MCF 10A (cell line): ENCODE measurements at regions of chr2 and their contacts with region 1.

Region 1: DNA sequence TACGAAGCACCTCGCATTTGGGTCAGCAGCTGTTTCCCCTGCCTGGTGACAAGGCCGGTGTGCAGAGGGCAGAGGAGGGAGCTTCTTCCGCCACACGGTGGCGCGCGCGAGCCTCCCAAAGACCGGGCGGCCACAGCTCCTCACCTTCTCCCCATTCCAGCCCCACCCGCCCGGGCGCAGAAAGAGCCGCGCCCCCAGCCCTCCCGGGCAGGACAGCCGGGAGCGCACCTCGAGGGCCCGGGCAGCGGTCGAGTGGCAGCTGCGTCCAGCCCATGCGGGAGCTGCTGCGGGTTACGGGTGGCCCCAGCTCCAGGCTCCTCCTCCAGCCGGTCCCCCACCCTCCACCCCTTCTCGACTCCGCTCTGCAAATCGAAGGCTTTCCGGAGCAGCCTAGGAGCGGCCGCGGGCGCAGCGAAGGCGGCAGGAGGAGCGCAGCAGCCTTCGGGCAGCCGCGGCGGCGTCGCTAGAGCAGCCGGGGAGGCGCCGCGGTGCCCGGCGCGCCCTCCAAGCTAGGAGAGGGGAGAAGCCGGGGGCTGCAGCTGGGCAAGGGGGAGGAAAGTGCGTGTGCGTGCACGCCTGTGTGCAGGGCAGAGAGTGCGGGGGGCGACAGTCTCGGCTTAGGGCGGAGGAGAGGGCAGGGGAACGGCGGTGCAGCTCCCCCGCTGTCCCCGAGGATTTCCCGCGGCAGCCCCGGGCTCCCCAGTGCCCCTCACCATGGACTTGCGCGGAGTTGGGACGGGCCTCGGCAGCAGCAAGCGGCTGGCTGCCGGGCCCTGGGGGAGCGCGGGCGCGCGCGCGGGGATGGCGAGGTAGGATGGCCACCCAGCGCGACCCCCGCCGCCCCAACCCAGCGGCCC is at the start of gene CCDC85A:
- DNase-seq: peak; percentile 83
- H3K4me3 Mint-ChIP-seq: peak within 1 kb of the TSS; percentile 89
- H3K27ac Mint-ChIP-seq: no peak within 1 kb of the TSS
- H3K4me1 Mint-ChIP-seq: peaks cover 11% of the 10 kb centered on the region
- H3K27me3 Mint-ChIP-seq: no peaks in the 10 kb centered on the region
- CTCF ChIP-seq: peak; percentile 94
- total RNA-seq, gene CCDC85A: 0.16 and 0.20 TPM in 2 replicates

Region 2: DNA sequence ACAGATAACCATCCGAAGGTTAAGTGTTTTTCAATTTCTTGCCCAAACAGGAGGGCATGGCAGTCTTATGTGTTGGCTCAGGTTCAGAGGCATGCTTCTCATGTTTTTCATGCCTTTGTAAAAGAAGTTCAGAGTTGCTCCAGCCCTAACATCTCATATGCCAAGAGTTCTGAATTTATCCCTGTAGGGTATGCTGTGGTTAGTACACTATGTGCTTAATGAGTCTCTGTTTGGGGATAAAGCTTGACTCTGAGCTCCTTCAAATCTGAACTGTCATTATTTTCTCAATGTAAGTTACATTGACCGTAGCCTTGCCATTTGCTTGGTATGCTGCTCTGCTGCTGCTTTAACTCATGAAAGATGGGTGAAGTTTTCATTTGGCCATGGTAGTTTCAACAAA is 422.3 kb before region 1 on chr2:
- CTCF ChIA-PET with region 1: no interaction called
- POLR2A ChIA-PET with region 1: no interaction called
- intact Hi-C with region 1: no loop called
- DNase-seq: peak; percentile 83
- H3K4me3 Mint-ChIP-seq: peak overlapping the region; percentile 42
- H3K27ac Mint-ChIP-seq: peak overlapping the region; percentile 80
- H3K4me1 Mint-ChIP-seq: peaks cover 30% of the 10 kb centered on the region
- H3K27me3 Mint-ChIP-seq: no peaks in the 10 kb centered on the region
- CTCF ChIP-seq: no peak

Region 3: GRCh38 chr2:56244911-56245530 is 61.1 kb after region 1 on chr2:
- CTCF ChIA-PET with region 1: no interaction called
- POLR2A ChIA-PET with region 1: no interaction called
- intact Hi-C with region 1: no loop called
- DNase-seq: peak; percentile 40
- H3K4me3 Mint-ChIP-seq: no peak overlapping the region
- H3K27ac Mint-ChIP-seq: no peak overlapping the region
- H3K4me1 Mint-ChIP-seq: peaks cover 6% of the 10 kb centered on the region
- H3K27me3 Mint-ChIP-seq: no peaks in the 10 kb centered on the region
- CTCF ChIP-seq: no peak

Region 4: GRCh38 chr2:56741601-56742102 is 557.8 kb after region 1 on chr2:
- CTCF ChIA-PET with region 1: interaction called, 25 read pairs
- POLR2A ChIA-PET with region 1: interaction called, 8 read pairs
- intact Hi-C with region 1: no loop called
- DNase-seq: peak; percentile 95
- H3K4me3 Mint-ChIP-seq: peak overlapping the region; percentile 63
- H3K27ac Mint-ChIP-seq: peak overlapping the region; percentile 96
- H3K4me1 Mint-ChIP-seq: peaks cover 28% of the 10 kb centered on the region
- H3K27me3 Mint-ChIP-seq: no peaks in the 10 kb centered on the region
- CTCF ChIP-seq: no peak

Region 5: GRCh38 chr2:56749152-56749752 is 565.4 kb after region 1 on chr2:
- CTCF ChIA-PET with region 1: interaction called, 25 read pairs
- POLR2A ChIA-PET with region 1: interaction called, 3 read pairs
- intact Hi-C with region 1: no loop called
- DNase-seq: peak; percentile 44
- H3K4me3 Mint-ChIP-seq: no peak overlapping the region
- H3K27ac Mint-ChIP-seq: no peak overlapping the region
- H3K4me1 Mint-ChIP-seq: no peaks in the 10 kb centered on the region
- H3K27me3 Mint-ChIP-seq: no peaks in the 10 kb centered on the region
- CTCF ChIP-seq: peak; percentile 40

Region 6: DNA sequence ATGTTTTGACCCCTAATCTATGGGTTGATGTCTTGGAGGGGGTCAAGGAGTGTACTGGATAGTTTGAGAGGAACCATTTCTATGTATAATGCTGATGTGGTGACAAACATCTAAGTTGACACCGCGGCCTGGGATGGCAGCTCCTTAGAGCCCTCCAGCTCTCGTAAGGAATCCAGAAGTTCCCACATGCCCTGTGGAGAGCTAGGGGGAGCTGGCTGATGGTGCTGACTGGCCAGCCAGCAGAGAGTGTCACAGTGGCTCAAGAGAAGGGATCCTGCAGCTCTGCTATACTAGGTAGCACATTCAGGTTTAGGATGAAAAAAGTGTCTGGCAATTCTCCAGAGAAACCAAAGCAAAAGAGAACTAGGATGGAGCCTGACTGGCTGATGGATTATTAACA is 1020.5 kb after region 1 on chr2:
- CTCF ChIA-PET with region 1: no interaction called
- POLR2A ChIA-PET with region 1: no interaction called
- intact Hi-C with region 1: loop called (anchors 10 kb)
- DNase-seq: no peak
- H3K4me3 Mint-ChIP-seq: no peak overlapping the region
- H3K27ac Mint-ChIP-seq: no peak overlapping the region
- H3K4me1 Mint-ChIP-seq: no peaks in the 10 kb centered on the region
- H3K27me3 Mint-ChIP-seq: no peaks in the 10 kb centered on the region
- CTCF ChIP-seq: no peak

Region 7: DNA sequence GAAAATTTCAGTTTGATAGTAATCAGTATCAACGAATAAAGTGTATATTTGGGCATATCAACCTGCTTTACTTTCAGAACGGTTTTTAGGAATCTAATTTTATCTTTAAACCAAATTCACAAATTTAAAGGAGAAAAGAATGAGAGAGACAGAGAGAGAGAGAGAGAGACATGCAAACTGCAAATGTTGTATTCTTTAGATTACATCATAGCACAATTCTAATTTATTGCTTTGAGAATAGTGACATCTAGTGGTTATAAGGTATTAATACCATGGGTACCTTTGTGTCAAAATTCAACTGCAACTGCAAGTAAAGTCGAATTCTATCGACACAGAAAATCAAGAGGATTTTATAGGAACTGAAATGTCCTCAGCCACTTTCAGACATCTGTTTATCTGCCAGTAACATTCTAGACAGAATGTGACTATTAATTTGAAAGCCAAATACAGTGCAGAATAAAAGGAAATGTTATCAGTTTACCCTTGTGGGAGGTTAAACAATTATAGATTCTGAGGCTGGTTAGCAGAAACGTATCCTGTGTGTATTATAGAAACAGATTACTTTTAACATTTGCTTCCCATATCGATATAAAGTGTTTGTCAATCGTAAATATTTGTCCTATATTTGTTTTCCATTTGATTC is 1332.9 kb after region 1 on chr2:
- CTCF ChIA-PET with region 1: interaction called, 18 read pairs
- POLR2A ChIA-PET with region 1: no interaction called
- intact Hi-C with region 1: loop called (anchors 1 kb)
- DNase-seq: peak; percentile 38
- H3K4me3 Mint-ChIP-seq: no peak overlapping the region
- H3K27ac Mint-ChIP-seq: no peak overlapping the region
- H3K4me1 Mint-ChIP-seq: no peaks in the 10 kb centered on the region
- H3K27me3 Mint-ChIP-seq: no peaks in the 10 kb centered on the region
- CTCF ChIP-seq: peak; percentile 42